ENCODE measurements at regions of chr9 and their contacts with region 1.

Region 1: DNA sequence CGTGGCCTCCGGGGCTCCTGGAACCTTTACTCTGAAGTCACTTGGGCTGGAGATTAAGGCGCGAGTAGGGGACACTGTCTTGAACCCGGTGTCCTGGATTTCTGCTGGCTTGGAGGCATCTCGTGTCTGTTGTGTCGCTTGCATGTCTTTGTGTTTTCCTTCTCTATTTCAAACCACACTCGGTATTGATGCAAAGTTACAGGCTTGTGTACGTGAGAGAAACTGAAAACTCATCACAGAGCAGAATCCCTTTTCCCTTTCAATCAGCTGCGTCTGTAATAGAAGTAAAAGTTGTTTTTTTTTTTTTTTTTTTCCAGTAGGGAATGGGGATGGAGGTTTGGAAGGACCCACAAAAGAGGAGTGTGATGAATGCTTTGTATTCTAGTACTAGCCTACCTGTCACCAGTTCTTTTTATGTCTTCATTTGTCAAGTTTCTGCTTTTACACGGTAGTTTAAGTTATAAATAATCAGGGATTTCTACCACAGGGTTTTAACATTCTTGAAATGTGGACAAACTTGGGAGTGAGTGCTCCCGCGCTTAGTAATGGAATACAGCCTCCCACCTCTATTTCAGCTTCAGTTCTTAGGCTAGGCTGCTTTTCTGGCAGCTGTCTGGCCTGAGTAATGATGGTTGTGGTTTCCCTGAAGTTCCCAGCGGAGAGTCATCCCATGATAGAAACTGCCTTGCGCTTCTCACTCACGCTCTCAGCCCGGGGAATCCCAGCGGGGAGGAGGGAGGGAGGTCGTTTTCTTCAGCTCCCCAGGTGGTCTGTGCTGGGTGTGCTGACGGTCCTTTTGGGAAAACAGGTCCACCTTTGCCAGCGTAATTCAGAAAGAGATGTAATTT is 763 bp downstream of the TJP2 start:
- DNase-seq: peak in 1 of 35 experiments; percentile 38
- ATAC-seq: peak in 3 of 4 experiments; percentile 4 to 23 (median 18)
- H3K4me3 ChIP-seq: peak overlapping the region; percentile 54 to 73
- H3K4me3 Mint-ChIP-seq: peak overlapping the region; percentile 78 to 82 (median 79)
- H3K27ac ChIP-seq: no peak overlapping the region
- H3K27ac Mint-ChIP-seq: no peak overlapping the region
- H3K4me1 ChIP-seq: peaks cover 3 to 15% of the 10 kb centered on the region in 2 experiments
- H3K4me1 Mint-ChIP-seq: peaks cover 22 to 49% (median 38%) of the 10 kb centered on the region in 3 donors
- H3K27me3 ChIP-seq: peaks cover 0 to 23% of the 10 kb centered on the region in 2 experiments
- H3K27me3 Mint-ChIP-seq: peaks cover 34 to 38% of the 10 kb centered on the region in 2 donors

Region 2: GRCh38 chr9:69120904-69121827 is 53.7 kb before region 1 on chr9:
- CTCF ChIA-PET with region 1: interaction called in 1 of 2 experiments, 11 read pairs
- POLR2A ChIA-PET with region 1: no interaction called
- DNase-seq: peak in 18 of 35 experiments; percentile 0 to 34 (median 10)
- ATAC-seq: peak; percentile 57 to 71 (median 68)
- H3K4me3 ChIP-seq: peak overlapping the region; percentile 69 to 92
- H3K4me3 Mint-ChIP-seq: peak overlapping the region; percentile 91 to 92 (median 92)
- H3K27ac ChIP-seq: no peak overlapping the region
- H3K27ac Mint-ChIP-seq: peak overlapping the region in 1 of 2 donors; percentile 79
- H3K4me1 ChIP-seq: peaks cover 5 to 17% of the 10 kb centered on the region in 2 experiments
- H3K4me1 Mint-ChIP-seq: peaks cover 14 to 17% (median 16%) of the 10 kb centered on the region in 3 donors
- H3K27me3 ChIP-seq: peaks cover 0 to 22% of the 10 kb centered on the region in 2 experiments
- H3K27me3 Mint-ChIP-seq: no peaks in the 10 kb centered on the region

Measured in T-cell (primary cell).